OCI-LY7 (cell line): ENCODE measurements at regions of chr6 and their contacts with region 1.

Region 1: GRCh38 chr6:83859410-83860358 is at the start of gene CYB5R4:
- DNase-seq: peak; percentile 94
- H3K4me3 ChIP-seq: peak within 1 kb of the TSS; percentile 89
- H3K27ac ChIP-seq: peak within 1 kb of the TSS; percentile 20
- H3K4me1 ChIP-seq: peaks cover 33% of the 10 kb centered on the region
- CTCF ChIP-seq: peak; percentile 55
- total RNA-seq, gene CYB5R4: 15.7 and 16.2 TPM in 2 replicates

Region 2: DNA sequence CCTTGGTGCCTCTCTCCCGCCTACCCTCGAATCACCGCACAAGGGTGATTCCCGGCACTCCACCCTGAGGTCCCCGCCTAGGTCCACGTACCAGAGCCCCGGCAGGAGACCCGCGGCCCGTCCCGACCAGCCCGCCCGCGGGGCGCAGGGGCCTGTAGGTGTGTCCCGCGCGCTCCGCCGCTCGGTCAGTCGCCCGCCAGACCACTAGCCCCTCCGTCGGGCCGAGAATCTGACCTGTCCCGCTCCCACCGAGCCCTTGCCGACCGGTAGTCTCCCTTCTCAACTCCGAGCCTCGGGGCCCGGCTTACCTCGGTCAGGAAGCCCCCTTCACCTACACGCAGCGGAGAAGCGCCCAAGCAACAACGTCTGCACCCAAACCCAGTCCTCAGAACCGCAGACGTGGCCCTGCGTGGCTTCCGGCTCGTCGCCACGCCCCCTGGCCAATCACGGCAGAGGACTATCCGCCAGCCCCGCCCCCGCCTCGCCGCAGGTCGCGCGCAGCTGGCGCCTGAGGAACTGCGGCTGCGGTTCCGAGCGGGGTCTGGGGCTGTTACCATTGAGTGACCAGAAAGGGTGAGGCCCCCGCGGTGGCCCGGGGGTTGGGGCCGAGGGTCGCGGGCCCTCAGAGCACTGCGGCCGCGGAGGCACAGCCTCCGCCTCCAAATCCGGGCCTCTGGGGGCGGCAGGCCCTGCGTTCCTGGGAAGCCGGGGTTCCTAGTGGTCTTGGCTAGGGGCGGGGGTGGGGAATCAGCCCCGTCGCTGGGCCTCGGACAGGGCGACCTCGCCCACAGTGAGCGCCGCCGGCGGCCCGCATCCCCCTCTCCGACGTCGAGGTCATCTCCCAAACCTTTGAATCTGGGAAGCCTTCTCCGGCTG is 666.6 kb before region 1 on chr6 and contains the starts of genes PGM3 and RWDD2A:
- CTCF ChIA-PET with region 1: no interaction called
- POLR2A ChIA-PET with region 1: no interaction called
- intact Hi-C with region 1: loop called (anchors 10 kb)
- DNase-seq: peak; percentile 92
- H3K4me3 ChIP-seq: peak within 1 kb of the TSS; percentile 94
- H3K27ac ChIP-seq: no peak within 1 kb of the TSS
- H3K4me1 ChIP-seq: peaks cover 11% of the 10 kb centered on the region
- CTCF ChIP-seq: no peak
- total RNA-seq, gene PGM3: 17.5 and 18.6 TPM in 2 replicates
- total RNA-seq, gene RWDD2A: 2.2 and 2.9 TPM in 2 replicates

Region 3: GRCh38 chr6:83904395-83904794 is 44.7 kb after region 1 on chr6:
- CTCF ChIA-PET with region 1: no interaction called
- POLR2A ChIA-PET with region 1: no interaction called
- intact Hi-C with region 1: no loop called
- DNase-seq: no peak
- H3K4me3 ChIP-seq: no peak overlapping the region
- H3K27ac ChIP-seq: no peak overlapping the region
- H3K4me1 ChIP-seq: no peaks in the 10 kb centered on the region
- CTCF ChIP-seq: no peak

Region 4: DNA sequence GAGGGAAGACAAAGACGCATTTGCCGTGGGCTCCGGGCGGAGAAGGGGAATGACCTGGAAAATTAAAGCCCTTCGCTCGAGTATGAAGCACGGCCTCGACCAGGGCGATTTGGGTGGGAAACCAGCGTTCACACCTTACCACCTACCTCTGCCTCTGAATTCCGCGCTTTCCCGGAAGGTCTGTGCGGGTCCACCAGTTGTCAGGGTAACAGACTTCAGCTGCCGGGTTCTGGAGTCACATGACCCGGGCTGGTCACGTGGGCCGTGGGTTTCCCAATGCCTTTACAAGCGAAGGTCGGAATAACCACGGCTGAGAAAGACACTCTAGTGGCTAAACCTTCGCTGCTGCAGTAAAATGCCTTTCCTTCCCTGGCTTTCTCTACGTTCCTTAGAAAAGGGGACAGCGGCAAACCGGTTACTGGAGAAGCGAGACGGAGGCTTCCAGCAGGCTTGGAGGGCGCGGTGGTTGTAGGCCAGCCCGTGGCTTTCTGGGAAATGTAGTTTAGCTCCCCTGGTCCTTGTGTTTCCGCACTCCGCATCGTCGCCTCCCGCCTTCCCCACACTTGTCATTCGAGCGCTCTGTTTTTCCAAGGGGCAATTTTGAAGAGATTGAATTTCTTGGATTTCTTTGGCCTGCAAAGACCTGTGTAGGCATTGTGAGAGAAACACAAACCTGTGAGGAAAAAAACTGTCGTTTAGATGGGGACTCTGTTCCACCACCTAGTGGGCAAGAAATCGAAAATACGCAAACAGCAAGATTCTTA is 367.9 kb after region 1 on chr6 and contains the start of gene CEP162:
- CTCF ChIA-PET with region 1: no interaction called
- POLR2A ChIA-PET with region 1: interaction called, 3 read pairs
- intact Hi-C with region 1: loop called (anchors 5 kb)
- DNase-seq: peak; percentile 90
- H3K4me3 ChIP-seq: peak within 1 kb of the TSS; percentile 93
- H3K27ac ChIP-seq: peak within 1 kb of the TSS; percentile 26
- H3K4me1 ChIP-seq: peaks cover 9% of the 10 kb centered on the region
- CTCF ChIP-seq: peak; percentile 89
- total RNA-seq, gene CEP162: 6.3 and 8.9 TPM in 2 replicates